Activated CD4-positive, alpha-beta memory T cell treated with anti-CD3 and anti-CD28 coated beads for 36 hours (primary cell): ENCODE measurements at regions of chr12 and their contacts with region 1.

Region 1: DNA sequence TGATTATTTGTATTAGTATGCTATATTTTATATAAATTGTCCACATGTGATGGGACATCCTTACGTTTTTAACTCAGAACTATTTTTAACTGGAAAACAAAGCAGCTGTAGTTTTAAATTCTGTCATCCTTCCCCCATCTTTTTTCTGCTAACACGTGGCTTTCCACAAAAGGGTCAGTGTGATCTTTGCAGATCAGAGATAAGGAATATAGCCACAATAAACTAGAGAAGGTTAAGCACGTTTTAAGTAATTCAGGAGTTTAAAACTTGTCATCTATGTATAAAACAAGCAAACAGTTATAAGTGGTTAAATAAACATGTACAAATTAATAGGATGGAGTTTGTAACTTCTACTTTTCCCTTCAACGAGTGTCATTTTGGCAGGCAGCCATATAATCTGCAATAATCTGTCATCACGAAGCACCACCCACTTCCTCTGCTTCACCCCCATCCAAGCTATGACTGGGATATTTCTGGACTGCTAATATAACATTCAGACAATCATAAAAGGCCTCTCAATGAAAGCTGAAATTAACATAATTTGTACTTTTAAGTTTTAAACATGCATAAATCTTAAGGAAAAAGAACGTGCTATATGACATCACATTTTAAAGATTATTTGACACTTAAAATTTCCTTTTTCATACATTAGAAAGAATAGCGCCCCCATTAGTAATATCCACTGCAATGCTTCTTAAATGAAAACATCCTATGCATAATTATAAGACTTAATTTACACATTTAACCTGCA is 15.3 kb downstream of the TAOK3 start:
- DNase-seq: peak; percentile 65
- H3K4me3 Mint-ChIP-seq: peak overlapping the region; percentile 90
- H3K27ac Mint-ChIP-seq: peak overlapping the region; percentile 90
- H3K4me1 Mint-ChIP-seq: peaks cover 49% of the 10 kb centered on the region
- H3K27me3 Mint-ChIP-seq: no peaks in the 10 kb centered on the region

Region 2: DNA sequence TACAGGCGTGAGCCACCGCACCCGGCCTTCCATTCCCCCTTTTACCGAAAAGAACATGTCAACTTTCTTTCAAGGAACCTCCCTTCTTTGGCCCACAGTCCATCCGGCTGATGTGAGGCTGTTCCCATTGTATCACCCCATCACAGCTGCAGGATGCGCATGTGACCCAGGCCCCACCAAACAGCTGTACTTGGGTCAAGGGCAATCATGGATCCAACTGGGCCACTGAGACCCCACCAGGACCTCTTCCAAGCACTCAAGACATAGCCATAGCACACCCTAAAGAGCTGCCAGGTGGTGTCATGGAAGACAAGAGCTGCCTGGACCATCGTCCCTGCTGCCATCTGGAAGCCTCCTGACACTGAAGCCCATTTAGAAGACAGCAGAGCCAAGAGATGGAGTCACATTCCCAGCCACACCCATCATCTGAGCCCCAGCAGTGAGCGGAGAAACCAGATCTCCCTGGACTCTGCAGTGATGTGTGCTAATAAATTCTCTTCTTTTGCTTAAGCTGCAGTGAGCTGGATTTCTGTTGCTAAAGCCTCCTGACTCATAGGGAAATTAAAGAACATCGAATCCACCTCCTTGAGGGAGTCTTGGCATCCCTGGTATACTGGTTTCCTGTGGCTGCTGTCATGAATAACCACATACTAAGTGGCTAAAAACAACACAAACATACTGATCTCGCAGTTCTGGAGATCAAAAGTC is 494.3 kb before region 1 on chr12:
- CTCF ChIA-PET with region 1: no interaction called
- POLR2A ChIA-PET with region 1: no interaction called
- intact Hi-C with region 1: no loop called
- DNase-seq: no peak
- H3K4me3 Mint-ChIP-seq: no peak overlapping the region
- H3K27ac Mint-ChIP-seq: no peak overlapping the region
- H3K4me1 Mint-ChIP-seq: no peaks in the 10 kb centered on the region
- H3K27me3 Mint-ChIP-seq: peaks cover 12% of the 10 kb centered on the region

Region 3: GRCh38 chr12:118055144-118055557 is 302.3 kb before region 1 on chr12:
- CTCF ChIA-PET with region 1: no interaction called
- POLR2A ChIA-PET with region 1: no interaction called
- intact Hi-C with region 1: loop called (anchors 5 kb)
- DNase-seq: peak; percentile 87
- H3K4me3 Mint-ChIP-seq: no peak overlapping the region
- H3K27ac Mint-ChIP-seq: peak overlapping the region; percentile 9
- H3K4me1 Mint-ChIP-seq: peaks cover 60% of the 10 kb centered on the region
- H3K27me3 Mint-ChIP-seq: no peaks in the 10 kb centered on the region

Region 4: DNA sequence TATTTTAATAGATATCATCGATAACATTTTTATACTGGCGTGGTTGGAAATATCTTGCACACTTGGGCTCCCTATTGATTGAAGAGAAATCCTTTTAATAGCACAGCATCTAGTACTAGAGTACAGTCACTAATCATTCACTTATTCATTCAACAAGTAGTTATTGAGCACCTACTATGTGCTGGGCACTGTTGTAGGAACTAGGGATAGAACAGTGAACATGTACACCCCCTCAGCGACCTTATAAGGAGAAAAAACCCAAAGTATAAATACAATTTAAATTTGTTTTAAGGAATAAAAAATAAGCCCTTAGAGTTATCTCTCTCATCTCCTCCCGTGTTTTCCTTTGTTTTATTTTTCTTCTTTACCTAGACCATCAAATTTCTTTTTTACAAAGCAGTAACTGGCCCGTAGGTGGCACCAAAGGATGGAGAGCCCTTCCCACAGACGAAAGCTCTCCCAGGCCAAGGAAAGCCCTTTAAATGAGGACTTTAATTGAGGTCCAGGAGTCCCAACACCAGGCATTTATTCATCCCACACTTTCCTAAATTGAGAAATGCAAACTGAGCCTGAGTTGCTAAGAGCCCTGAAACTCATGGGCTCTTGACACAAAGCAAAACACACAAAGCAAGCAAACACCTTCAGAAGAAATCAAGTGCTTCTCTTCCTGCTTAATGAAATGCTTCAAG is 192.5 kb before region 1 on chr12:
- CTCF ChIA-PET with region 1: interaction called, 3 read pairs
- POLR2A ChIA-PET with region 1: interaction called, 3 read pairs
- intact Hi-C with region 1: loop called (anchors 2 kb)
- DNase-seq: peak; percentile 33
- H3K4me3 Mint-ChIP-seq: no peak overlapping the region
- H3K27ac Mint-ChIP-seq: peak overlapping the region; percentile 30
- H3K4me1 Mint-ChIP-seq: peaks cover 37% of the 10 kb centered on the region
- H3K27me3 Mint-ChIP-seq: no peaks in the 10 kb centered on the region

Region 5: GRCh38 chr12:118183705-118184104 is 173.7 kb before region 1 on chr12:
- CTCF ChIA-PET with region 1: interaction called, 6 read pairs
- POLR2A ChIA-PET with region 1: no interaction called
- intact Hi-C with region 1: loop called (anchors 5 kb)
- DNase-seq: no peak
- H3K4me3 Mint-ChIP-seq: no peak overlapping the region
- H3K27ac Mint-ChIP-seq: no peak overlapping the region
- H3K4me1 Mint-ChIP-seq: peaks cover 20% of the 10 kb centered on the region
- H3K27me3 Mint-ChIP-seq: no peaks in the 10 kb centered on the region

Region 6: DNA sequence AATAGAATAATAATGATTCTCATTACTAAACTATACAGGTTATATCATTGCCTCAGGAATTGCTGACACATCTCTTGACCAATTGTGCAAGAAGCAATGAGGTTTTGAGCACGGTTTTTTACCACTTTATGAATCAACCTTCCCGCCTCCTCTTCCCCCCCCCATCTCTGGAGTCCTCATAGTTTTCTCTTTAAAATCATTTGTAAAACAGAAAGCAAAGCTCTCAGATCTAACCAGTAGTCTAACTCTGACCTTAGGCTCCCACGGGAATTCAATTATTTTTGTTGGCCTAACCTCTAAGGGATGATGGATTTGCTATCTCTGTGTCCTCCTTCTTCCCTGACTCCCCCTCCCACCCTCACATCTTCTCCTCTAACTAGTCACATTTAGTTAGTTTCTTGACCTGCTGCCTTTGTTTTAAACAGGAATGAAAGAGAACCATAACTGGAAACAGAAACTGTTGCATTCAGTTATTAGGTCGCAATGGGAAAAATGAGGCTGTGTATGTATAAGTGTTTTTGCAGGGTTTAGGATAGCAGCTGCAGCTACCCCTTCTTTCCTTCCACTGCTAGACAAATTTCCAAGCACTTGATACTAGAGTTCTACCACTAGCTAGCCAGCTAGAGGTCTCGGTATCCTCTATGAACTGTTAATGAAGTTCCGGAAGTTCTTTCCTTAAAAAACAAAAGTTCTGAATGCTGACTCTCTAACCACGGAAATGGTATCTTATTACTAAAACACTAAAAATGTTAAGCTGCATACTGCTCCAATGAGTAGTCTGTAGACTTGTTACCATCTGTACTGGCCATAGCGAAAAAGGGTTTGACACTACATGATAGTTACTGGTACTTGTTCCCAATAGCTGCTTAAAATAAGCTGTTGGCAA is 50.1 kb before region 1 on chr12:
- CTCF ChIA-PET with region 1: interaction called, 15 read pairs
- POLR2A ChIA-PET with region 1: interaction called, 7 read pairs
- intact Hi-C with region 1: loop called (anchors 1 kb)
- DNase-seq: peak; percentile 79
- H3K4me3 Mint-ChIP-seq: peak overlapping the region; percentile 64
- H3K27ac Mint-ChIP-seq: peak overlapping the region; percentile 86
- H3K4me1 Mint-ChIP-seq: peaks cover 41% of the 10 kb centered on the region
- H3K27me3 Mint-ChIP-seq: no peaks in the 10 kb centered on the region

Region 7: GRCh38 chr12:118312578-118312977 is 44.9 kb before region 1 on chr12:
- CTCF ChIA-PET with region 1: interaction called, 15 read pairs
- POLR2A ChIA-PET with region 1: interaction called, 7 read pairs
- intact Hi-C with region 1: loop called (anchors 1 kb)
- DNase-seq: no peak
- H3K4me3 Mint-ChIP-seq: peak overlapping the region; percentile 2
- H3K27ac Mint-ChIP-seq: peak overlapping the region; percentile 64
- H3K4me1 Mint-ChIP-seq: peaks cover 44% of the 10 kb centered on the region
- H3K27me3 Mint-ChIP-seq: no peaks in the 10 kb centered on the region

Region 8: DNA sequence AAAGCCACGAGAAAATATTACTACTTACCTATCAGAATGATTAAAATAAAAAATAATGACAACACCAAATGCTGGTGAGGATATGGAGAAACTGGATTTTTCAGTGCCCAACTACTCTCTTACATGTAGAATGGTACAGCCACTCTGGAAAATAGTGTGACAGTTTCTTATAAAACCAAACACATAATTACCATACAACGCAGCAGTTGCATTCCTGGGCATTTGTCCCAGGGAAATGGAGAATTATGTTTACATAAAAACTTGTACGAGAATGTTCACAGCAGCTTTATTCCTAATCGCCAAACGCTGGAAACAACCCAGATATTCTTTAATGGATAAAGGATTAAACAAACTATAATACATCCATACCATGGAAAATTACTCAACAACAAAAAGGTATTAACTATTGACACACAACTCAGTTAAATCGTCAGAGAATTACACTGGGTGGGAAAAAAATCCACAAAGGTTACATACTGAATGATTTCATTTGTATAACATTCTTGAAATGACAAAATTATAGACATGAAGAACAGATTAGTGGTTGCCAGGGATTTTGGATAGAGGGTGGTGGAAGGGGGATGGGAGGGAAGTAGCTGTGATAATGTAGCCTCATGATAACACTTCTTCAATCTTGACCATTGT is 20.1 kb before region 1 on chr12:
- CTCF ChIA-PET with region 1: no interaction called
- POLR2A ChIA-PET with region 1: no interaction called
- intact Hi-C with region 1: no loop called
- DNase-seq: no peak
- H3K4me3 Mint-ChIP-seq: no peak overlapping the region
- H3K27ac Mint-ChIP-seq: no peak overlapping the region
- H3K4me1 Mint-ChIP-seq: peaks cover 31% of the 10 kb centered on the region
- H3K27me3 Mint-ChIP-seq: no peaks in the 10 kb centered on the region

Region 9: DNA sequence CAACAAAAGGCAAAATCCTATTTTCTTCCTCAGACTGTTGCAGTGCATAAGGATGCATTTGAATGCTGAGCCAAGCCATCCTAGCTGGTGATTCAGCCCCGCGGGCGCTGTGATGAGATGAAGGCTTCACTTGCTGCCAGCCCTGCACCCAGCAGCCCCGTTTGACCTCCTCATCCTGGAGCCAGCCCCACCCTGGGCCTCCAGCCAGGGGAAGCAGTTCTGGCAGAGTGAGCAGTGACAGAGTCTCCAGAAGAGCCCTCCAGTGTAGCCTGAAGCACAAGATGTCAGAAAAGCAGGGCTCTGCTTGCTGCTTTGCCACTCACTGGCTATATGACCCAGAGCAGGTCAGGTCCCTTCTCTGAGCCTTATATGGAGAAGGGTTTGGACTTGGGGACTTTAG is 725.1 kb after region 1 on chr12:
- CTCF ChIA-PET with region 1: no interaction called
- POLR2A ChIA-PET with region 1: no interaction called
- intact Hi-C with region 1: no loop called
- DNase-seq: no peak
- H3K4me3 Mint-ChIP-seq: no peak overlapping the region
- H3K27ac Mint-ChIP-seq: no peak overlapping the region
- H3K4me1 Mint-ChIP-seq: no peaks in the 10 kb centered on the region
- H3K27me3 Mint-ChIP-seq: no peaks in the 10 kb centered on the region